ENCODE measurements at regions of chr2 and their contacts with region 1.

Region 1: GRCh38 chr2:237474931-237475703 is 11.9 kb upstream of the MLPH start:
- DNase-seq: peak; percentile 72
- H3K4me3 Mint-ChIP-seq: peak overlapping the region; percentile 65
- H3K27ac Mint-ChIP-seq: peak overlapping the region; percentile 70
- H3K4me1 Mint-ChIP-seq: peaks cover 11% of the 10 kb centered on the region
- H3K27me3 Mint-ChIP-seq: peaks cover 10% of the 10 kb centered on the region

Region 2: DNA sequence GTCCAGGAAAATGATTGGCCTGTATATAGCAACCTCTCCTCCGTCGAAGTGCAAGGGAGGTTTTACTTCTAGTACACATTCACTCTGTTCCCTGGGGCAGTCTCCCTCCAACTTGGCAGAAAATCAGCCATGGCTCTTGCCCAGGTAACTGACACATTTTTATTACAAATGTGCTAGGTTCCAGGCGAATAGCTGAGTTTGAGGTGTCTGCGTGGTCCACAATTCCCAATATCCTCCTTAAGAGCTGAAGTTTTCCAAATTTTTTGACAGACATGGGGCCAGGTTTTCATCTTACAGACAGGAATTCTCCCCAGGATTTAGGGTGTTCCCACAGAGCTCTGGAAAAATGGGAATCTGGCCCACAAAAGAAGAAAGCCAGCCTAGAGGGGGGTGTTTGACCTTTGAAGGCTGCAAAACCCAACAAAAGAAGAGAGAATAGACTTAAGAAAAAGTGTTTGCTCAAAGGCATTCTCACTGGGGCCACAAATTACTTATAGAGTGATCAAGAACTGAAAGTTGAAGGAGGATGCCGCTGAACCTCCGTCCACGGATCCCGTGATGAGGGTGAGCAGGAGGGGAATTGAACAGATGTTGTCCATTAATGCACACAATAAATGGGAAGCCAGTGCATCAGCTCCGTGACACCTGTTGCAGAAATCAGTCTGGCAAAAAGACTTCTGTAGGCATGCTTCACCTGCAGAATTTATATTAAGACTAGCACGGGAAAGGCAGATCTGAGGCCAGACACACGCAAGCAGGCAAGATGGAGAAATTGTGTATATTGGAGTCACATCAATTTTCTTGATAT is 631.8 kb before region 1 on chr2:
- CTCF ChIA-PET with region 1: no interaction called
- intact Hi-C with region 1: no loop called
- DNase-seq: no peak
- H3K4me3 Mint-ChIP-seq: no peak overlapping the region
- H3K27ac Mint-ChIP-seq: no peak overlapping the region
- H3K4me1 Mint-ChIP-seq: peaks cover 1% of the 10 kb centered on the region
- H3K27me3 Mint-ChIP-seq: no peaks in the 10 kb centered on the region

Region 3: DNA sequence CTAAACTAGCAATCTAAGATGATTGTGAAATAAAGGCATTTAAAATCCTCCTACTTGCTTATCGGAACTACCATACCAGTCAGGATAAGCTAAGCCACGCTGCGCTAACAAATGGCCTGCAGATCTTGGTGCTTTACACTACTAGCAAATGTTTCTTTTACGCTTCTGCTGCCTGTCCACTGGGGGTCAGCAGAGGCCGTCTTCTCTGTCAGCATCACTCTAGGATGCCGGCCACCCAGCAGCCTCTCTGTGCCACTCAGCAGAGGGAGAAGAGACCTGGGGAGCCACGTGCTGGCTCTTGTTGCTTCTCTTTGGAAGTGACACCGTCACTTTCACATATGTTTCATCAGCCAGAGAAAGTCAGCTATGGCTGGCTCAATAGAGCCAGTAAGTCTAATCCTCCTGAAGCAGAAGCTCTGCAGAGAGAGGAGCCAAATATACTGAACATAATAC is 352.9 kb before region 1 on chr2:
- CTCF ChIA-PET with region 1: no interaction called
- intact Hi-C with region 1: loop called (anchors 1 kb)
- DNase-seq: peak; percentile 78
- H3K4me3 Mint-ChIP-seq: no peak overlapping the region
- H3K27ac Mint-ChIP-seq: no peak overlapping the region
- H3K4me1 Mint-ChIP-seq: no peaks in the 10 kb centered on the region
- H3K27me3 Mint-ChIP-seq: no peaks in the 10 kb centered on the region

Region 4: GRCh38 chr2:237154082-237154638 is 321.0 kb before region 1 on chr2:
- CTCF ChIA-PET with region 1: interaction called, 9 read pairs
- intact Hi-C with region 1: loop called (anchors 1 kb)
- DNase-seq: peak; percentile 72
- H3K4me3 Mint-ChIP-seq: no peak overlapping the region
- H3K27ac Mint-ChIP-seq: no peak overlapping the region
- H3K4me1 Mint-ChIP-seq: peaks cover 29% of the 10 kb centered on the region
- H3K27me3 Mint-ChIP-seq: no peaks in the 10 kb centered on the region

Region 5: DNA sequence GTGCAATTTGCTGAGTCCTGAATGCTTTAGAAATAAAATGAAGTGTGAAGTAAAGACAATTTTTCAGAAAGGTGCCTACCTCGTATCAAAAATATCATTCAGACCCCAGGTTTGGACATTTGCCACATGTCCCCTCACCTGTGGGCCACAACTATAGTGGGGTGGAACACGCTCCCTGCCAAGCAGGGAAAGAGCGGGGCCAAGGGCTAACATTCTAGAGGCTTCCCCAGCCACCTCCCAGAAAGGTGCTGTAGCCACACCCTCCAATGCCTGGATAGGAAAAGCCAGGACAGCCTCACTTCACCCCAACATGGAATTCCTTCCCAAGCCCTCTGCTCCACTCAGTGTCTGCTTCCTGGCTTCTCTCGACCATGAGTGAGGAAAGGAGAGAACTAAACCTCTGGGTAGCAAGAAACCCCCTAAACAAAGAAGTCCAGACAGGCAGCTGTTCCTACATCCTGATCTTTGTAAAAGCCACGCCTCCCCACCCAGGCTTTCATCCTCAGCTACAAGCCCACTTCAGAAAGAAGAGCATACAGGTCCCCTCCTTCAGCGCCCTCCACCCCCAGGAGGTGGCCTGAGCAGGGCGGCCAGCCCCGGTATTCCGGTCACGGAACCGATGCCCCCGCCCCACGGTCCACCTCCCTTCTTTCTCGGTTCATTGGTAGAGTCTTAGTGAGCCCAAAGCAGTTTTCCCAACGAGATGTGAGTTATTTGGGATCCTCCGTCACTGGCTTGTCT is 63.3 kb before region 1 on chr2:
- CTCF ChIA-PET with region 1: interaction called, 11 read pairs
- intact Hi-C with region 1: no loop called
- DNase-seq: no peak
- H3K4me3 Mint-ChIP-seq: no peak overlapping the region
- H3K27ac Mint-ChIP-seq: no peak overlapping the region
- H3K4me1 Mint-ChIP-seq: no peaks in the 10 kb centered on the region
- H3K27me3 Mint-ChIP-seq: no peaks in the 10 kb centered on the region

Region 6: DNA sequence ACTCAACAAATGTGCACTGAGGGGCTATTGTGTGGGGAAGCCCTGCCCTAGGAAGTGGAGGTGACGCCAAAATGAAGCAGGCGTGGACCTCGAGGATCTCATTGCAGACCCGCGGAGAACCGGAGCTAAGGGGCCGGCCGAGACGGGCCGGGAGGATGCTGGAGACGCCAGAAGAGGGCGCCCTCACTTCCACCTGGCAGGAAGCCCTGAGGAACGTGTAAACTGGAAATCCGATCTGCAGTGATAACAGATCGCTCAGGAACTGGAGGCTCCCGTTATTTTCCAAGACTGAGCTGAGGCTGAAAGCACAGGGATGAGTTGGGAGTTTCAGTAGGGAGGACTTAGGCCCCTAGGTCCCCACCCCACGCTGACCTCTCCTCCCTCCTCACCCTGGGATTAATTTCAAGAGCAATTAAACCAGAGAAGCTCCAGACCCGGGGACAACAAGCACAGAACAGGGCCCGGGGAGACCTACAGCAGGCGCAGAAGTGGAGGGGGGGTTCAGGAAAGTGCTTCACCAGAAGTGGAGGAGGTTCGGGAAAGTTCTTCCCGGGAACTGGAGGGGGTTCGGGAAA is 53.5 kb before region 1 on chr2:
- CTCF ChIA-PET with region 1: interaction called, 125 read pairs
- intact Hi-C with region 1: loop called (anchors 1 kb)
- DNase-seq: peak; percentile 88
- H3K4me3 Mint-ChIP-seq: peak overlapping the region; percentile 25
- H3K27ac Mint-ChIP-seq: no peak overlapping the region
- H3K4me1 Mint-ChIP-seq: peaks cover 29% of the 10 kb centered on the region
- H3K27me3 Mint-ChIP-seq: peaks cover 11% of the 10 kb centered on the region

Region 7: GRCh38 chr2:237427769-237428506 is 47.2 kb before region 1 on chr2:
- CTCF ChIA-PET with region 1: interaction called, 125 read pairs
- intact Hi-C with region 1: no loop called
- DNase-seq: peak; percentile 94
- H3K4me3 Mint-ChIP-seq: no peak overlapping the region
- H3K27ac Mint-ChIP-seq: peak overlapping the region; percentile 72
- H3K4me1 Mint-ChIP-seq: peaks cover 80% of the 10 kb centered on the region
- H3K27me3 Mint-ChIP-seq: peaks cover 7% of the 10 kb centered on the region

Region 8: GRCh38 chr2:237529452-237530402 is 54.6 kb after region 1 on chr2:
- CTCF ChIA-PET with region 1: no interaction called
- intact Hi-C with region 1: no loop called
- DNase-seq: no peak
- H3K4me3 Mint-ChIP-seq: no peak overlapping the region
- H3K27ac Mint-ChIP-seq: no peak overlapping the region
- H3K4me1 Mint-ChIP-seq: no peaks in the 10 kb centered on the region
- H3K27me3 Mint-ChIP-seq: no peaks in the 10 kb centered on the region